ENCODE measurements at regions of chr2 and their contacts with region 1.

Region 1: DNA sequence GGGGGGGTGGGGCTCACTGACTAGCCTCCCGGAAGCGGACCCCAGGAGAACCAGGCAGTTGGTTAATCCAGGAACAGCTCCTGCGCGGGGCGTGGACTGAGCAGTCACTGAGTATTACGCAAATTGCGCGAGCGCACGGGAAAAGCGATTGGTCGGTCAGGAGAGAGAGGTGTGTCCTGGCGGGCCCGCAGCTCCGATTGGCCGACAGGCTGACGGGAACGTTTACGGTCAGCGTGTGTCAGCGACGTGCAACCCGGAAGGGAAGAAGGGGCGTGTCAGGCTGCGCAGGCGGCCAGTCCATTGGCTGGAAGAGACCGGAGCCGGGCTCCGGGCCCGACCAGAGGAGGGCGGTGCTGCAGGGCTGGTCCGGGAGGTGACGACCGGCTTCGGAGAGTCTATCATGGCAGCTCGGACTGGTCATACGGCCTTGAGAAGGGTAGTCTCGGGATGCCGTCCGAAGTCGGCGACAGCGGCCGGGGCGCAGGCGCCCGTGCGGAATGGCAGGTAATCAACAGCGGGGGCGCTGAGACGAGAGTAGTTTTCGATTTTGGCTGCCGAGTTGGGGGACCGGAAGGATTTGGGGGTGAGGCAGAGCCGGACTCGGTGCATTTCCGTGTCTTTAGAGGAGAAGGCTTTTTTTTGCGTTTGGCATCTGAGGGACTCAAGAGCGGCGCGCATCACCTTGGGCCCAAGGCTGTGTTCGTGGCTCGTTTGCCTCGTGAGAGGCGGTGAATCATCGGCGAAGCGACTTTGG is at the start of gene COQ10B:
- DNase-seq: peak; percentile 100
- H3K4me3 ChIP-seq: peak within 1 kb of the TSS; percentile 70 to 80
- H3K27ac ChIP-seq: peak within 1 kb of the TSS; percentile 99
- H3K4me1 ChIP-seq: peaks cover 3% of the 10 kb centered on the region
- H3K27me3 ChIP-seq: no peaks in the 10 kb centered on the region
- CTCF ChIP-seq: peak in 3 of 4 experiments; percentile 36 to 54 (median 48)
- POLR2A ChIP-seq: peak; percentile 72
- total RNA-seq, gene COQ10B: 18.7 to 20.1 TPM

Region 2: GRCh38 chr2:196926562-196927375 is 526.6 kb before region 1 on chr2 and contains the start of gene PGAP1:
- intact Hi-C with region 1: loop called (anchors 5 kb)
- DNase-seq: peak; percentile 87
- H3K4me3 ChIP-seq: peak within 1 kb of the TSS; percentile 72 to 80
- H3K27ac ChIP-seq: peak within 1 kb of the TSS; percentile 87 to 89
- H3K4me1 ChIP-seq: no peaks in the 10 kb centered on the region
- H3K27me3 ChIP-seq: no peaks in the 10 kb centered on the region
- CTCF ChIP-seq: peak in 1 of 4 experiments; percentile 20
- POLR2A ChIP-seq: peak; percentile 87
- total RNA-seq, gene PGAP1: 8.3 to 12.0 TPM

Region 3: GRCh38 chr2:197268786-197269584 is 184.4 kb before region 1 on chr2:
- intact Hi-C with region 1: no loop called
- DNase-seq: no peak
- H3K4me3 ChIP-seq: no peak overlapping the region
- H3K27ac ChIP-seq: no peak overlapping the region
- H3K4me1 ChIP-seq: no peaks in the 10 kb centered on the region
- H3K27me3 ChIP-seq: no peaks in the 10 kb centered on the region
- CTCF ChIP-seq: no peak
- POLR2A ChIP-seq: no peak

Region 4: GRCh38 chr2:197378494-197379307 is 74.6 kb before region 1 on chr2:
- intact Hi-C with region 1: no loop called
- DNase-seq: peak; percentile 36
- H3K4me3 ChIP-seq: no peak overlapping the region
- H3K27ac ChIP-seq: no peak overlapping the region
- H3K4me1 ChIP-seq: no peaks in the 10 kb centered on the region
- H3K27me3 ChIP-seq: no peaks in the 10 kb centered on the region
- CTCF ChIP-seq: peak in 3 of 4 experiments; percentile 63 to 79 (median 76)
- POLR2A ChIP-seq: no peak

Region 5: GRCh38 chr2:197434541-197435513 is 18.5 kb before region 1 on chr2 and contains the start of gene SF3B1:
- intact Hi-C with region 1: loop called (anchors 2 kb)
- DNase-seq: peak; percentile 98
- H3K4me3 ChIP-seq: peak within 1 kb of the TSS; percentile 83 to 97
- H3K27ac ChIP-seq: peak within 1 kb of the TSS; percentile 96 to 97
- H3K4me1 ChIP-seq: peaks cover 6% of the 10 kb centered on the region
- H3K27me3 ChIP-seq: no peaks in the 10 kb centered on the region
- CTCF ChIP-seq: peak in 2 of 4 experiments; percentile 32 to 45
- POLR2A ChIP-seq: peak; percentile 95
- total RNA-seq, gene SF3B1: 197 to 250 TPM

Region 6: DNA sequence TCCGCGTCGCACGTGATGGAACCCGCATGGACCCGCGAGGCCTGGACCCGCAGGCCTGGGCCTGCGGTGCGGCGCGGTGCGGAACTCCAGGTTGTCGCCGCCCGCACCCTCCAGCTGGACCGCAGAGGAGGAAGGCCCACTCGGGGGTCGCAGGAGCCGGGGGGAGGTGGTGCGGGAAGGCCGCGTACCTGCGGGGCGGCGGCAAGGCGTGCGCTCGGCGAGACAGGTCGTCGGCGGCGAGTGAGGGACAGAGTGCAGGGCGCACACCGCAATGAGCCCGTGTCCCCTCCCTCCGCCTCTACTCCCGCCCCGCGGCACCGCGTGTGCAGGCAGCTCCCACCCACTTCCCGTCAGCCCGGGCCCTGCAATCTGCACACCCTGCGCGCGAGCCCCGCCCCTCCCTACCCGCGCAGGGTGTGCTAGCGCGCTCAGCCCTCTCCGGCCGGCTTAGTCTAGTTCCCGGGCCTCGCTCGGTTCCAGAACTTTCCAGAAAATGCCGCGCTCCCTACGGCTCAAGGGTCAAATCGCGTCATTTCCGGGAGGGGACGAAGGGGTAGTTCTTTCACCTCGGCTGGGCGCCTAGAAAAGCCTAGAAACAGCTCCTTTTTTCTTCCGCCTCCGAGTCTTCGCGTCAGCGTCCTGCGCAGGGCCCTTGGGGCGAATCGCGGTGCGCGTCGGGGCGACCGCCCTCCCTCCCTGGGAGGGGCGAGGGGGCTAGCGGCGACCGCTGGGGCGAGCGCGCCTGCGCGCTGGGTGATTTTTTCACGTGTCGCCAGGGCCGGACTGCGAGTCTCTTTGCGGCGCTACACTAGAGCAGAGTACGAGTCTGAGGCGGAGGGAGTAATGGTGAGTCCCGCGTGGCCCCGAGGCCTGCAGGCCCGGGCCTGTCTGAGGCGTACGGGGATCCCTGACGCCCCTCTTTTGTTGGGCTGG is 46.5 kb after region 1 on chr2 and contains the starts of genes HSPD1 and HSPE1:
- intact Hi-C with region 1: loop called (anchors 5 kb)
- DNase-seq: peak; percentile 98
- H3K4me3 ChIP-seq: peak within 1 kb of the TSS; percentile 85 to 93
- H3K27ac ChIP-seq: peak within 1 kb of the TSS; percentile 99 to 100
- H3K4me1 ChIP-seq: no peaks in the 10 kb centered on the region
- H3K27me3 ChIP-seq: no peaks in the 10 kb centered on the region
- CTCF ChIP-seq: peak in 2 of 4 experiments; percentile 18 to 47
- POLR2A ChIP-seq: peak; percentile 99
- total RNA-seq, gene HSPD1: 95.5 to 110 TPM
- total RNA-seq, gene HSPE1: 57.0 to 139 TPM

Region 7: DNA sequence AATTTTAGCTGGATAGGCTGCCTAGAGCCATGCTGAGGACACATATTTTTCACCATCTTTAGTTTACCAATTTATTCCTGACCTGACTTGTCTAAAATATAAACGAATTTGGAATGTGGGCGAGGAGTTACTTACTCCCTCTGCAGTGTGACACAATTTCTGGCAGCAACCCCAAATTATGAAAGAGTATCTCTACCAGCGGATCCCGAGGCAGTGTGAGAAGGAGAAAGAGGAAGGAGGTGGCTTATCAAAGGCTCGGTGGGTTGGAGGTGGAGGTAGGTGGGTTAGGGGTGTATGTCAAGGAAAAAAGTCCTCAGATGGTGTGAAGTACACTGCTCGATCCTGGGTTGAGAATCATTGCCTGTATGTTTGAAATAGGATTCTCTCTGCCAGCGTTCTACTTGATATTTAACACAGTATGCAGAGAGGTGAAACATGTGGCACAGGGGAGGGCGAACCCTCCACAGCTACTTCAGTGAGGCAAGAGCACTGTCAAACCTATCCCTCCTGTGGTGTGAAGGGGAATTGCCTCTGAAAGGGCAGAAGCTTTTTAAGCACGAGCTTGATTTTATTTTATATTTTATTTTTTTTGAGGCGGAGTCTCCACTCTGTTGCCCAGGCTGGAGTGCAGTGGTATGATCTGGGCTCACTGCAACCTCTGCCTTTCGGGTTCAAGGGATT is 146.1 kb after region 1 on chr2:
- intact Hi-C with region 1: no loop called
- DNase-seq: peak; percentile 24
- H3K4me3 ChIP-seq: no peak overlapping the region
- H3K27ac ChIP-seq: no peak overlapping the region
- H3K4me1 ChIP-seq: no peaks in the 10 kb centered on the region
- H3K27me3 ChIP-seq: no peaks in the 10 kb centered on the region
- CTCF ChIP-seq: peak in 2 of 4 experiments; percentile 39 to 40
- POLR2A ChIP-seq: no peak